Motor neuron (in vitro differentiated cells): ENCODE measurements at regions of chr1 and their contacts with region 1.

Region 1: DNA sequence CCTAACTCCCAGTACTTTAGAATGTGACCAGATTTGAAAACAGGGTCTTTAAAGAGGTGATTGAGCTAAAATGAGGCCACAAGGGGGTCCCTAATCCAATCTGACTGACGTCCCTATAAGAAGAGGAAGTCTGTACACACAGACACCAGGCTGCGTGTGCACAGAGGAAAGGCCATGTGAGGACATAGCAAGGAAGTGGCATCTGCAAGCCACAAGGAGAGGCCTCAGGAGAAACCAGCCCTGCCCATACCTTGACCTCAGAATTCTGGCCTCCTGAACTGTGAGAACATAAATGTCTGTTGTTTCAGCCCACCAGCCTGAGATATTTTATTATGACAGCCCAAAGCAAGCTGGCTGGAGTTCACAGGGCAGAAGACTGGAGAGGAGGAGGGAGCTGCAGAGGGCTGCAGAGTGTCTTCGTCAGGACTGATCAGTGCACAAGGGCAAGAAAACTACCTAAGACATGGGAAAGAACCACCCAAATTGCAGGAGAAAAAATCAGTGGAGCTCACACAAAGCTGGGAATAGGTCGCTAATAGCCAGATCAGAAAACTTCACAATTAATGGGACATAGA is 14.0 kb upstream of the WNT9A start:
- ATAC-seq: peak in 3 of 8 experiments; percentile 23 to 67 (median 31)
- H3K4me3 ChIP-seq: no peak overlapping the region
- H3K27ac ChIP-seq: no peak overlapping the region
- H3K4me1 ChIP-seq: no peaks in the 10 kb centered on the region

Region 2: GRCh38 chr1:227787513-227788270 is 174.0 kb before region 1 on chr1:
- in situ Hi-C with region 1: loop called in 1 of 9 experiments (anchors 25 kb)
- ATAC-seq: peak; percentile 66 to 89 (median 87)
- H3K4me3 ChIP-seq: peak overlapping the region; percentile 42 to 54 (median 49)
- H3K27ac ChIP-seq: peak overlapping the region in 1 of 2 donors; percentile 9
- H3K4me1 ChIP-seq: peaks cover 7 to 13% of the 10 kb centered on the region in 2 donors

Region 3: GRCh38 chr1:227855687-227856086 is 106.1 kb before region 1 on chr1:
- in situ Hi-C with region 1: no loop called
- ATAC-seq: no peak
- H3K4me3 ChIP-seq: no peak overlapping the region
- H3K27ac ChIP-seq: no peak overlapping the region
- H3K4me1 ChIP-seq: no peaks in the 10 kb centered on the region

Region 4: GRCh38 chr1:228109073-228109961 is 147.6 kb after region 1 on chr1 and contains the start of gene MRPL55:
- in situ Hi-C with region 1: no loop called
- ATAC-seq: peak; percentile 82 to 96 (median 87)
- H3K4me3 ChIP-seq: peak within 1 kb of the TSS; percentile 72 to 99 (median 94)
- H3K27ac ChIP-seq: peak within 1 kb of the TSS; percentile 87 to 94
- H3K4me1 ChIP-seq: peaks cover 12 to 13% of the 10 kb centered on the region in 2 donors
- total RNA-seq, gene MRPL55: 60.7 to 175 (median 87.2) TPM